Prostate gland (tissue), 2 donors: ENCODE measurements at regions of chr1 and their contacts with region 1.

Region 1: DNA sequence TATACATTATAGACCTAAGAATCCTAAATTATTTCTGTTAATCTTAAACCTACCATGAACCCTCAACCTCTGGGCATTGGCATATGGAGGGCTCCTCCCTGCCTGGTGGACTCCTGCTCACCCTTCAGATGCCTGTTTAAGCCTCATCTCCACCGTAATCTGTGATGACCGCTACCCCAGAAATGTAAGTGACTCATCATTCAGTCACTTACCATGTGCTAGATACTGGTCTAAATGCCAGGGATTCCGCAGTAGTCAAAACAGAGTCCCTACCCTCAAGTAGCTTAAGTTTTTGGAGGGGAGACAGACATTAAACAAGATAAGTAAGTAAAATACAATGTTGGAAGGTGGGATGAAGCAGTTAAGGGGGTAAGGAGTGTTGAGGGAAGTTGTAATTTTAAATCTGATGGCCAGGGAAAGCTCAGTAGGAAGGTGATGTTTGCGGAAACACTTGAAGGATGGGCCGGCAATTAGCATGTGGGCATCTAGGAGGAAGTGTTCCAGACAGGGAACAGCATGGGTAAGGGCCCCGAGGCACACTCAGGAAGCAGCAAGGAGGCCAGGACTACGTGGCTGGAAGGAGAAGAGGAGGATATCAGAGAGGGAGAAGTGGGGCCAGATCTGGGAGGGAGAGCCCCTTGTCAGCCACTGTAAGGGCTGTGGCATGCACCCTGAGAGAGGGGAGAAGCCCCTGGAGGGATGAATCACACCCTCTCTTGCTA is 141.7 kb upstream of the HOOK1 start:
- DNase-seq: no peak
- H3K4me3 ChIP-seq: no peak overlapping the region
- H3K27ac ChIP-seq: peak overlapping the region; percentile 70 to 73
- H3K4me1 ChIP-seq: peaks cover 10% of the 10 kb centered on the region
- H3K27me3 ChIP-seq: no peaks in the 10 kb centered on the region
- CTCF ChIP-seq: no peak
- POLR2A ChIP-seq: no peak

Region 2: DNA sequence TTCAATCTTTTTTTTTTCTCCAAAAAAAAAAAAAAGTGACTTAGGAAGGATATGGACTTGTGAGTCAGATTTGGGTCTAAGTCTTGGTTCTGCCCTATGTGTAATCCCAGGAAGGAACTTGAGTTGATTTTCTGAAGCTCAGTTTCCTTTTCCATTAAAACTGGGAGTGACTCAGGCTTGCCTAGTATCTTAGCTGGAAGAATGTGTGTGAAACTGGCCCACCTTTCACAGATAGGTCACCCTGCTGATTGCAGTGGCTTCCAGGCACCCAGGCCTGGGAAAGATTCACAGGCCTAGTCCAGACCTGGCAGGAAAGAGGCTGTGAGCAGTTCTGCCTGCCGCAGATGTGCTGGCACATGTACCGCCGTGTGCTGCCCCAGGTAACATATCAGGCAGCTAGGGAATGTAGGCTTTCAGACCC is 76.6 kb before region 1 on chr1:
- intact Hi-C with region 1: loop called (anchors 5 kb)
- DNase-seq: peak; percentile 27
- H3K4me3 ChIP-seq: no peak overlapping the region
- H3K27ac ChIP-seq: peak overlapping the region; percentile 66 to 71
- H3K4me1 ChIP-seq: peaks cover 22% of the 10 kb centered on the region
- H3K27me3 ChIP-seq: no peaks in the 10 kb centered on the region
- CTCF ChIP-seq: no peak
- POLR2A ChIP-seq: no peak

Region 3: GRCh38 chr1:59917026-59917784 is 244.2 kb after region 1 on chr1:
- intact Hi-C with region 1: no loop called
- DNase-seq: no peak
- H3K4me3 ChIP-seq: no peak overlapping the region
- H3K27ac ChIP-seq: no peak overlapping the region
- H3K4me1 ChIP-seq: no peaks in the 10 kb centered on the region
- H3K27me3 ChIP-seq: no peaks in the 10 kb centered on the region
- CTCF ChIP-seq: no peak
- POLR2A ChIP-seq: no peak